ENCODE measurements at regions of chr19 and their contacts with region 1.

Region 1: GRCh38 chr19:19488875-19489690 is 26.3 kb downstream of the TSSK6 start:
- DNase-seq: peak; percentile 53
- ATAC-seq: peak; percentile 62
- H3K4me3 Mint-ChIP-seq: peak overlapping the region; percentile 58
- H3K27ac Mint-ChIP-seq: peak overlapping the region; percentile 91
- H3K4me1 Mint-ChIP-seq: peaks cover 58% of the 10 kb centered on the region
- H3K27me3 Mint-ChIP-seq: no peaks in the 10 kb centered on the region
- CTCF ChIP-seq: no peak

Region 2: DNA sequence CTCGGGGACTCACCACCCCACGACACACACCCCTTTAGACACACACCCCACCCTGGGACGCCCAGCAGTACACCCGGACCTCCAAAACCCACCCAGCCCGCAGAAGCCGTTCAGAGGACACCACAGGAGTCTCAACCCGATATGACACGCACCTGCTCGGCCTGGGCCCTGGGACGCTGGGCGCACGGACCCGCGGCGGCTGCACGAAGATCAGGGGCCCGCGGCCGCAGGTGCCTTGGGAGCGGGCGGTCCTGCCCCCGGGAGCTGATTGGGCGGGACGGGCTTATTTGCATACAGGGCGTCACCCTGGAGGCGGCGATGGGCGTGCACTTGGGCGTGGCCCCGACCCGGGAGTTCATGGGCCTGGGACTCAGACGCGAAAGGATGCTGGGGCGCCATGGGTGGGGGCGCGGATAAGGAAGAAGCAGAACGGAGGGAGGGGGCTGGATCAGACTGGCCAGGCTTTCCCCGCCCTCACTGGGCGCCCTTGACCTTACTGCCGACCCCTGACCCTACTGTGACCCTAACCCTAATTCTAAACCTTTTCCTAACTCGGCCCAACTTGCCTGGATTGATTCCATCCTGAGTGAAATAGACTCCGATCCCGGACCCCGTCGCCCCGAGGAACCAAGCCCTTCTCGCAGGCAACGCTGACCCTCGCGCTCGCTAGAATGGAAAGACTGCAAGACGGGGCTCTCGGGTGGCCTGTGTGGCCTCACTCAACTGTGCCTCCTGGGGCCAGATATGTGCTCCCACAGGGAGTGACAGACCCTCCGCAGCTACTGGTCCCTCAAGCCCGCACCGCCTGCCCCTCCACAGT is 318.8 kb before region 1 on chr19 and contains the start of gene MEF2B:
- CTCF ChIA-PET with region 1: interaction called, 12 read pairs
- POLR2A ChIA-PET with region 1: no interaction called
- intact Hi-C with region 1: loop called (anchors 1 kb)
- DNase-seq: peak; percentile 89
- ATAC-seq: peak; percentile 95
- H3K4me3 Mint-ChIP-seq: peak within 1 kb of the TSS; percentile 83
- H3K27ac Mint-ChIP-seq: peak within 1 kb of the TSS; percentile 63
- H3K4me1 Mint-ChIP-seq: peaks cover 33% of the 10 kb centered on the region
- H3K27me3 Mint-ChIP-seq: no peaks in the 10 kb centered on the region
- CTCF ChIP-seq: no peak
- total RNA-seq, gene MEF2B: 11.7 and 15.5 TPM in 2 replicates

Region 3: DNA sequence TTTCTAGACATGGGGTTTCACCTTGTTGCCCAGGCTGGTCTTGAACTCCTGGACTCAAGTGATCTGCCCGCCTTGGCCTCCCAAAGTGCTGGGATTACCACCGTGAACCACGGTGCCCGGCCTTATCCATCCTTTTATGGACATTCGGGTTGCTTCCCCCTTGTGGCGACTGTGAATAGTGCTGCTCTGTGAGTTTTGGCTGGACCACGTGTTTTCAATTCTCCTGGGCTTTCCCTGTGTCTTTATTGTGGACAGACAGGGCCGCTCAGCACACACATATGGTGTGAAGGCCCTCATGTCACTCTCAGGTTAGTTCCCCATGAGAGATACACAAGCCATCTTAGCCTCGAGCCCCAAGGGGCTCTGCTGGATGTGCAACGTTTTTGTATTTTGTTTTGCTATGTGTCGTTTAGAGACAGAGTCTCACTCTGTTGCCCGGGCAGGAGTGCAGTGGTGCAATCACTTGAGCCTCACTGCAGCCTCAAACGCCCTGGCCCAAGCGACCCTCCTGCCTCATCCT is 127.9 kb before region 1 on chr19:
- CTCF ChIA-PET with region 1: interaction called, 140 read pairs
- POLR2A ChIA-PET with region 1: interaction called, 35 read pairs
- intact Hi-C with region 1: loop called (anchors 1 kb)
- DNase-seq: peak; percentile 54
- ATAC-seq: peak; percentile 68
- H3K4me3 Mint-ChIP-seq: peak overlapping the region; percentile 74
- H3K27ac Mint-ChIP-seq: peak overlapping the region; percentile 57
- H3K4me1 Mint-ChIP-seq: peaks cover 23% of the 10 kb centered on the region
- H3K27me3 Mint-ChIP-seq: no peaks in the 10 kb centered on the region
- CTCF ChIP-seq: peak; percentile 87

Region 4: GRCh38 chr19:19372656-19373416 is 116.2 kb before region 1 on chr19:
- CTCF ChIA-PET with region 1: interaction called, 140 read pairs
- POLR2A ChIA-PET with region 1: interaction called, 5 read pairs
- intact Hi-C with region 1: no loop called
- DNase-seq: no peak
- ATAC-seq: peak; percentile 98
- H3K4me3 Mint-ChIP-seq: peak overlapping the region; percentile 69
- H3K27ac Mint-ChIP-seq: peak overlapping the region; percentile 94
- H3K4me1 Mint-ChIP-seq: peaks cover 12% of the 10 kb centered on the region
- H3K27me3 Mint-ChIP-seq: no peaks in the 10 kb centered on the region
- CTCF ChIP-seq: no peak

Region 5: GRCh38 chr19:19444681-19445155 is 44.4 kb before region 1 on chr19:
- CTCF ChIA-PET with region 1: no interaction called
- POLR2A ChIA-PET with region 1: no interaction called
- intact Hi-C with region 1: loop called (anchors 1 kb)
- DNase-seq: no peak
- ATAC-seq: peak; percentile 65
- H3K4me3 Mint-ChIP-seq: peak overlapping the region; percentile 54
- H3K27ac Mint-ChIP-seq: peak overlapping the region; percentile 78
- H3K4me1 Mint-ChIP-seq: peaks cover 64% of the 10 kb centered on the region
- H3K27me3 Mint-ChIP-seq: no peaks in the 10 kb centered on the region
- CTCF ChIP-seq: no peak

Region 6: DNA sequence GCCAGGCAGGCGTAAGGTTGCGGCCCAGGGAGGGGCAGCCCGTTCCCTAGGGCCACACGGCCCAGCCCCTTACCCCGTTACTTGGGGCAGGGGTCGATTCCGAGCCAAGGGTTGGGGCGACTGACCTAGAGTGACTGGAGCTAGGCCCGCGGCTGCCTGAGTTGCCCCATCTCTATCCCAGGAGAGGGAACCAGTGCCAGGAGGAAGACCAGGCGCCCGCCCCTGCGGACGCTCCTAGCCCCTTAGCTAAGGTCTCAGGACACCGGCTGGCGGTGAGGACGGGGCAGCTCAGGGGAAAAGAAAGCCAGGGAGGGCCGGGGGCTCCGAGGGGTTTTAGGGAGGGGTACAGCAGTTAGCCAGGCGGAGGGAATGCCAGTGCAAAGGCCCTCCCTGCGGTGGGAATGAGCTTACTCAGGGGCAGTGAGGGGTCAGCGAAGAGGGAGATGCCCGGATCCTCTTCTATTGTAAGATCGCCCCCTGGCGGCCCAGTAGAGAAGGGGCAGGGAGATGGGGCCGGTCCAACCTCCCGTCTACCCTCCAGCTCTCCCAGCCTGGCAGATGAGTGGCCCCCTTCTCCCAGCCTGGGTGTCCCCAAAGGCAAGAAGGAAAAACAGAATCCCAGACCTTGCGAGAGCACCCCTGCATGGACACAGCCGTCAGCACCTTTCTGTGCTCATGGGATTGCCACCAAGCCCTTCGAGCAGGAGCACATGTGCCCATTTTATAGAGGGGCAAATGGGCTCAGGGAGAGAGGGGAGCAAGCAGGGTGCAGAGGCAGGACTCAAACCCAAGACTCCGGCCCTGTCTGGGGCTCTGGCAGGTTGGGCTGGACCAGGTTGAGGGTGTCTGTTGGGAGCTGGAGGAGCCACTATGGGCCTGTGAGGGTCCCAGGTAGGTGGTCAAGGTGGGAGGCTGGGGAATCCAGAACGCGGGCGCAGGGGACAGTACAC is 65.3 kb after region 1 on chr19:
- CTCF ChIA-PET with region 1: no interaction called
- POLR2A ChIA-PET with region 1: no interaction called
- intact Hi-C with region 1: no loop called
- DNase-seq: peak; percentile 43
- ATAC-seq: peak; percentile 48
- H3K4me3 Mint-ChIP-seq: no peak overlapping the region
- H3K27ac Mint-ChIP-seq: no peak overlapping the region
- H3K4me1 Mint-ChIP-seq: no peaks in the 10 kb centered on the region
- H3K27me3 Mint-ChIP-seq: peaks cover 1% of the 10 kb centered on the region
- CTCF ChIP-seq: no peak